Left colon (tissue), 2 donors: ENCODE measurements at regions of chr11 and their contacts with region 1.

Region 1: DNA sequence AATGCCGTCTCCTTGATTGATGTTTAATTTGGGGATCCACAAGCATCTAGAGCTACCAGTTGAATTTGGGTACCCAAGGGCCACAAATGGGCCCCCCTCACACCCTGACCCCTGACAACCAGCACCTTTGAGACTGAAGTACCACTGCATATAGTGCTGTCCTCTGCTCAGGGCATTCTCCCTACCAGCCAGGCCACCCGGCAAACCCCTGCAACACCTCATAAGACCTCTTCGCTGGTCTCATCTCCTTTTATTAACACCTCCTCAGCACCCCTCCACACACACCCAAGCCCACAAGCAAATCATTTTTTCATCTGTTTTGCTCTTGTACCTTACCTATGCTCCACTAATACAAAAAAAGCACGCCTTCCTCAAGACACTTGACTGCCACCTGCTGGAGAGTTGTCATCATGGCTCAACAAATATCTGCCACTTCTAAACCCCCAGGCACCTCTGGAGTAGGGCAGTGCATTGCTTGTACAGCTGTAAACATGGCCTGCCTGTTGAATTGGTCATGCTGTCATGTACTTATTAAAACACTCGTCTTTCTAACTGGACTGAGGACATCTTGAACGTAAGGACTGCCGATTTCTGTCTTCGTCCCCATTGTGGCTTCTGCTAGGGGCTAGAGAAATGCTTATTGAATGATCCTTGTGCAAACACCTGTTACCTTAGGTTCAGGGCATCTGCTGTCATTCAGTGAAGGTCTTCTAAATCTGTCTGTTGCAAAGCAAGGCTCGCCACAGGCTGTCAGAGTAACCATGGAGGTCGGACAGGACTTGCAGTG is 66.5 kb downstream of the BMAL1 start:
- DNase-seq: peak; percentile 49 to 82
- ATAC-seq: peak; percentile 68

Region 2: GRCh38 chr11:12963792-12964536 is 380.2 kb before region 1 on chr11:
- intact Hi-C with region 1: loop called in 1 of 2 experiments (anchors 10 kb)
- DNase-seq: peak; percentile 41 to 78
- ATAC-seq: peak; percentile 89

Region 3: DNA sequence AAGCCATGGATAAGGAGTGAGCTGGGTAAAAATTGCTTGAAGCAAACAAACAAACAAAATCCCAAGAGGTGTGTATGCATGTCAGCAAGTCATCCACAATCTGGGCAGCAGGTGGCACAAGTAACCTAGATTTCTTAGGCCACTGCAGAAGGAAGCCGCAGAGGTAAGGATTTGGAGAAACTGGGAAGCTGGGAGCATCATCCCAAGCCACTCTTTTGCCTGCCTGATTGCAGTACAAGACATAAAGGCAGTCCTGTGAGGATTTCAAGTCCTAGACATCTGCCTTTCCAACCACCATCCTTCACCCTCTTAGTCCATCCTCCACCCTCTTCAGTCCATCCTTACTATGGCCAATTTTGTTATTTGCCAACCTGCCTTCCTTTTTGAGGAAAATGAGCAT is 133.7 kb before region 1 on chr11:
- intact Hi-C with region 1: loop called in 1 of 2 experiments (anchors 2 kb)
- DNase-seq: peak; percentile 44 to 73
- ATAC-seq: peak; percentile 67